Natural killer cell (primary cell): ENCODE measurements at regions of chr6 and their contacts with region 1.

Region 1: DNA sequence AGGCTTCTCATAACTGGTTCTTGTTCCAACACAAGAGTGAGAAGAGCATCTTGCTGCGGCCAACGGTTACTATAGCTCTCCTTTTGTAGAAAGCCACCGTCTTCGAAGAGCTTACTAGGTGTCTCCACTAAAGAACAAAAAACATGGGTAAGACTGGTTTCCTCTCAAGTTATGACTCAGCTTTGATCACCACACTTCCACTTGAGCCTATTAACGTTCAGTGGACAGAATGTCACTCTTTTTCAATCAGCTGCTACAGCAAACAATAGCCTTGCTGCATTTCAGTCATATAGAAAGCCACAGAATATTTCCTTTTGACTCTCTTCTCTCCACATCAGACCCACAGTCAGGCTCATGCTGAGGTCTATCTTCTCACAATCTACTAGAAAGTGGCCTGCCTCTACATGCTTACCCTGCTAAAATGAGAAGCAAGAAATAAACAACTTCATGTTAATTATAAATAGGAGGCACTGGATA is 243.5 kb upstream of the PREP start:
- DNase-seq: peak in 1 of 2 donors; percentile 77
- ATAC-seq: peak; percentile 79 to 87 (median 83)
- H3K4me3 ChIP-seq: no peak overlapping the region
- H3K4me3 Mint-ChIP-seq: peak overlapping the region; percentile 54
- H3K27ac ChIP-seq: peak overlapping the region; percentile 77
- H3K27ac Mint-ChIP-seq: peak overlapping the region; percentile 88 to 95
- H3K4me1 ChIP-seq: peaks cover 46% of the 10 kb centered on the region
- H3K4me1 Mint-ChIP-seq: peaks cover 66 to 75% of the 10 kb centered on the region in 2 donors
- H3K27me3 ChIP-seq: no peaks in the 10 kb centered on the region
- H3K27me3 Mint-ChIP-seq: no peaks in the 10 kb centered on the region
- CTCF ChIP-seq: no peak

Region 2: DNA sequence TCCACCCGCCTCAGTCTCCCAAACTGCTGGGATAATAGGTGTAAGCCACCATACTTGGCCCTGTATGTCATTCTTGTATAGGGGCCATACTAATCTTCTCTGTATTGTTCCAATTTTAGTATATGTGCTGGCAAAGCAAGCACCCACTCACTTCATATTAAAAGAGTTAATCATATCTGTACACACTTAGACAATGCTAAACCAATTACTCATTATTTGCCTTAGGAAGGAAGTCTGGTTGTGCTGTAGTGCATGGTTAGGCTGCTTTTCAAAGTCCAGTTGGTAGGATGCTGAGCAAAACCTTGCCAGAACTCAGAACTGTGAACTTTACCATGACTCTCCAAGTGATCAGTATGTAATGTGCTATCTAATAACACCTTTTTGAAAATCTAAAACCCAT is 600.9 kb before region 1 on chr6:
- intact Hi-C with region 1: no loop called
- DNase-seq: no peak
- ATAC-seq: no peak
- H3K4me3 ChIP-seq: no peak overlapping the region
- H3K4me3 Mint-ChIP-seq: no peak overlapping the region
- H3K27ac ChIP-seq: no peak overlapping the region
- H3K27ac Mint-ChIP-seq: no peak overlapping the region
- H3K4me1 ChIP-seq: no peaks in the 10 kb centered on the region
- H3K4me1 Mint-ChIP-seq: no peaks in the 10 kb centered on the region
- H3K27me3 ChIP-seq: no peaks in the 10 kb centered on the region
- H3K27me3 Mint-ChIP-seq: peaks cover 12 to 17% of the 10 kb centered on the region in 2 donors
- CTCF ChIP-seq: no peak

Region 3: DNA sequence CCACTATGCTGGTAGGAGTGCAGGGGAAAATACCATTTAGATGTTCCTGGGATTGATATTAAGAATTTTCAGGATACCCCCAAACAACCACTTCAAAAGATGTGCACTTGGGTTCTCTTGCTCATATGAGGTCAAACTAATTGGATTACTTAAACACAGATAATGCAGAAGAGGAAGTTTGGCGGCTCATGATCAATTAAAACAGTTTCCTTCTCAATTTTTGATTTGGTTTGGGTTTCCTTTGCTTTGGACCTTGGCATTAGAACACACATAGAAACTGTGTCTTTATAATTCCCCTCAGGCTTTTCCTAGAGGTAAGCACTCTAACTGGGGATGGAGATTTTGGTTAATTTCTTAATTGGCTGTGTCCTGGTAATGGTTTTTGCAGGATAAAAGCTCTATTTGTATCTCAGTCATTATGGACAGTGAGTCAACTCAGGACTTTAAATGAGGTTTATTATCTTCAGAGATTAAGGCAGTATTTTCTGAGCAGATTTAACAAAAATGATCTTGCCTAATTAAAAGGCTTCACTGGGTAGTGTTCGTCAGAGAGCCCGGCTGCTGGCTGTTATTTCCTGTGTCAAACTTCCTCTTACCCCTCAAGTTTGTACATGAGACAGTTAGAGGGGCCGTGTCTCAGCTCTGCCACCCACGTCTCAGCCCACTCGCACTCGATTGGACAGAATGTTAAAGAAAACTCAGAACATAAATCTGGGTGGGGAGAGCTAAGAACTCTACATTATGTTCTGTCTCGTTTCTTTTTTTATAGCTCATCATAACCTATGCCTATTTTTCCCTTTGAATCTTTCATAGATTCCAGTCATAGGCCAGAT is 193.3 kb before region 1 on chr6:
- intact Hi-C with region 1: loop called (anchors 10 kb)
- DNase-seq: peak; percentile 45 to 81
- ATAC-seq: peak; percentile 97 to 100 (median 97)
- H3K4me3 ChIP-seq: peak overlapping the region; percentile 5
- H3K4me3 Mint-ChIP-seq: peak overlapping the region; percentile 72
- H3K27ac ChIP-seq: peak overlapping the region; percentile 84
- H3K27ac Mint-ChIP-seq: peak overlapping the region; percentile 86 to 91
- H3K4me1 ChIP-seq: peaks cover 16% of the 10 kb centered on the region
- H3K4me1 Mint-ChIP-seq: peaks cover 31 to 39% of the 10 kb centered on the region in 2 donors
- H3K27me3 ChIP-seq: no peaks in the 10 kb centered on the region
- H3K27me3 Mint-ChIP-seq: peaks cover 0 to 5% of the 10 kb centered on the region in 2 donors
- CTCF ChIP-seq: no peak

Region 4: GRCh38 chr6:105591053-105591452 is 55.4 kb before region 1 on chr6:
- intact Hi-C with region 1: no loop called
- DNase-seq: peak in 1 of 2 donors; percentile 60
- ATAC-seq: peak; percentile 75 to 96 (median 96)
- H3K4me3 ChIP-seq: no peak overlapping the region
- H3K4me3 Mint-ChIP-seq: no peak overlapping the region
- H3K27ac ChIP-seq: no peak overlapping the region
- H3K27ac Mint-ChIP-seq: peak overlapping the region; percentile 15 to 39
- H3K4me1 ChIP-seq: peaks cover 5% of the 10 kb centered on the region
- H3K4me1 Mint-ChIP-seq: peaks cover 7 to 13% of the 10 kb centered on the region in 2 donors
- H3K27me3 ChIP-seq: no peaks in the 10 kb centered on the region
- H3K27me3 Mint-ChIP-seq: peaks cover 0 to 2% of the 10 kb centered on the region in 2 donors
- CTCF ChIP-seq: no peak

Region 5: GRCh38 chr6:105680131-105680530 is 33.7 kb after region 1 on chr6:
- intact Hi-C with region 1: loop called (anchors 2 kb)
- DNase-seq: no peak
- ATAC-seq: no peak
- H3K4me3 ChIP-seq: no peak overlapping the region
- H3K4me3 Mint-ChIP-seq: no peak overlapping the region
- H3K27ac ChIP-seq: no peak overlapping the region
- H3K27ac Mint-ChIP-seq: no peak overlapping the region
- H3K4me1 ChIP-seq: no peaks in the 10 kb centered on the region
- H3K4me1 Mint-ChIP-seq: no peaks in the 10 kb centered on the region
- H3K27me3 ChIP-seq: peaks cover 6% of the 10 kb centered on the region
- H3K27me3 Mint-ChIP-seq: no peaks in the 10 kb centered on the region
- CTCF ChIP-seq: no peak

Region 6: DNA sequence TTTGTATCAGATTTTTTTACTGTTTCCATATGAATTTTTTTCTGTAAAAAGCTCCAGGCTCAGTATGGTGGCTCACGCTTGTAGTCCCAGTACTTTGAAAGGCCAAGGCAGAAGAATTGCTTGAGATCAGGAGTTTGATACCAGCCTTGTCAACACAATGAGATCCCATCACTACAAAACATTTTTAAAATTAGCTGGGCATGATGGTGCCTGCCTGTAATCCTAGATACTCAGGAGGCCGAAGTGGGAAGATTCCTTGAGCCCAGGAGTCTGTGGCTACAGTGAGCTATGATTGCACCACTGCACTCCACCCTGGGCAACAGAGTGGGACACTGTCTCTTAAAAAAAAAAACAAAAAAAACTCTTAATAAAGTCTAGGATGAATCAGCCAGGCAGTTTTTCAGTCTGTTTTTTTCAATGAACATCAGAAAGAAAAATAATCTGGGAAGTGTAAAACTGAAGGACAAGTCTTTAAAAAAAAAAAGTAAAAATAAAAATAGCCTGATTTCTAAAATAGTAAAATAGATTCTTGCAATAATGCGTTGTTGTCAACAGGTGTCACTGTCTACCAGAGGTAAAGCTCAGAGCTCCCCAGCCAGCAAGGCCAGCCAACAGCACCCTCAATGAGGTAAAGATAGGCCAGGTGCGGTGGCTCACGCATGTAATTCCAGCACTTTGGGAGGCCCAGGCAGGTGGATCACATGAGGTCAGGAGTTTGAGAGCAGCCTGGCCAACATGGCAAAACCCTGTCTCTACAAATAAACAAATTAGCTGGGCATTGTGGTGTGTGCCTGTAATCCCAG is 688.4 kb after region 1 on chr6:
- intact Hi-C with region 1: no loop called
- DNase-seq: peak; percentile 24 to 83
- ATAC-seq: peak; percentile 79 to 88 (median 85)
- H3K4me3 ChIP-seq: no peak overlapping the region
- H3K4me3 Mint-ChIP-seq: no peak overlapping the region
- H3K27ac ChIP-seq: no peak overlapping the region
- H3K27ac Mint-ChIP-seq: no peak overlapping the region
- H3K4me1 ChIP-seq: no peaks in the 10 kb centered on the region
- H3K4me1 Mint-ChIP-seq: peaks cover 7 to 8% of the 10 kb centered on the region in 2 donors
- H3K27me3 ChIP-seq: peaks cover 5% of the 10 kb centered on the region
- H3K27me3 Mint-ChIP-seq: peaks cover 22 to 39% of the 10 kb centered on the region in 2 donors
- CTCF ChIP-seq: peak; percentile 73

Region 7: DNA sequence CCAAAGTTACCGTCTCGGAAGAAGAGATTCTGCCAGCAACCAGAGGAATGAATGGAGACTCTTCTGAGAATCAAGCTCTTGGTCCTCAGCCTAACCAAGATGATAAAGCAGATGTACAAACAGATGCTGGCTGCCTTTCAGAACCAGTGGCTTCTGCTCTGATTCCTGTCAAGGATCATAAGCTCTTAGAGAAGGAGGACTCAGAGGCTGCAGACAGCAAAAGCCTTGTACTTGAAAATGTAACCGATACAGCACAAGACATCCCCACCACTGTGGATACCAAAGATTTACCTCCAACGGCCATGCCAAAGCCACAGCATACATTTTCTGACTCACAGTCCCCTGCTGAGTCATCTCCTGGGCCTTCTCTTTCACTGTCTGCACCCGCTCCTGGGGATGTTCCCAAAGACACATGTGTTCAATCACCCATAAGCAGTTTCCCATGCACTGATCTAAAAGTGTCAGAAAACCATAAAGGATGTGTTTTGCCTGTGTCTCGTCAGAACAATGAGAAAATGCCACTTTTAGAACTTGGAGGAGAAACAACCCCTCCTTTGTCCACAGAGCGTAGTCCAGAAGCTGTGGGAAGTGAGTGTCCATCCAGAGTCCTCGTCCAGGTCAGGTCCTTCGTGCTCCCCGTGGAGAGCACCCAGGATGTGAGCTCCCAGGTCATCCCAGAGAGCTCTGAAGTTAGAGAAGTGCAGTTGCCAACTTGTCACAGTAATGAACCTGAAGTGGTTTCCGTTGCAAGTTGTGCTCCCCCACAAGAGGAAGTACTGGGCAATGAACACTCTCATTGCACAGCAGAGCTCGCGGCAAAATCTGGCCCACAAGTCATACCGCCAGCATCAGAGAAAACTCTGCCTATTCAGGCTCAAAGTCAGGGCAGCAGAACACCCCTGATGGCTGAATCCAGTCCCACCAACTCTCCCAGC is 873.3 kb after region 1 on chr6:
- intact Hi-C with region 1: loop called (anchors 2 kb)
- DNase-seq: peak; percentile 66 to 90
- ATAC-seq: peak; percentile 52 to 78 (median 72)
- H3K4me3 ChIP-seq: peak overlapping the region; percentile 56
- H3K4me3 Mint-ChIP-seq: peak overlapping the region; percentile 94
- H3K27ac ChIP-seq: peak overlapping the region; percentile 93
- H3K27ac Mint-ChIP-seq: peak overlapping the region; percentile 91 to 95
- H3K4me1 ChIP-seq: peaks cover 58% of the 10 kb centered on the region
- H3K4me1 Mint-ChIP-seq: peaks cover 51 to 76% of the 10 kb centered on the region in 2 donors
- H3K27me3 ChIP-seq: no peaks in the 10 kb centered on the region
- H3K27me3 Mint-ChIP-seq: no peaks in the 10 kb centered on the region
- CTCF ChIP-seq: no peak